Psoas muscle (tissue), 8 donors: ENCODE measurements at regions of chr12 and their contacts with region 1.

Region 1: DNA sequence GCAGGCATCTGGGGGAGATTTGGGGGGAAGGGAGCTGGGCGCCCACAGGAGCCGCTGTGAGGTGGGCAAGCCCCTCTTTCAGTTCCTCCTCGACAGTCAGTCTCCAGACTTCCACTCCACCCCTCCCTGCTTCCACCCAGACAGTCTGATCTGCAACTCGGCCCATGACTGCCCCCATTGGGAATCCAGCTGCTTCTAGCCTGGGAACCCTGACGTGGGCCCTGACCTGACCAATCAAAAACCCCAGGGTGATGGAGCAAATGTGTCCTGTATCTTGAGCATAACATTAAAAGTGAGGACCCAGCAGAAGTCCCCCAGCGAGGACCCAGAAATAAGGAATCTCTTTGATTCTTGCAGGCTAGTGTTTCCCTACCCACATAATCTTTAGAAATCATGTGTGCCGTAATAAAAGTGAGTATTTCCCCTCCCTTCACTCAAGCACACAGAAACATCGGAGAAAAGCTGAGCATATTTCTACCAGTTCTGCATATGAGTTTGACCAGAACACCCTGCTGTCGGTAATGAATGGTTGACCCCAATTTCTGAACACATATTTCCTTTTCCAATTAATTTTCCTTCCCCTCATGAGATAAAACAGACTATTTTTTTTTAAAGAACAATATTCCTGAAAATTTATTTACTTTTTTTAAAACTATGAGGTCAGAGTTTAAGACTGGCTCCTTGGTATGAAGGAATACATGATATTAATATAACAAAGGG is 6.4 kb downstream of the SSH1 start:
- DNase-seq: peak; percentile 59 to 72
- ATAC-seq: peak in 3 of 4 donors; percentile 22 to 46 (median 42)
- H3K4me3 ChIP-seq: no peak overlapping the region
- H3K27ac ChIP-seq: peak overlapping the region; percentile 100
- H3K4me1 ChIP-seq: peaks cover 86% of the 10 kb centered on the region
- H3K27me3 ChIP-seq: no peaks in the 10 kb centered on the region
- CTCF ChIP-seq: peak; percentile 6

Region 2: DNA sequence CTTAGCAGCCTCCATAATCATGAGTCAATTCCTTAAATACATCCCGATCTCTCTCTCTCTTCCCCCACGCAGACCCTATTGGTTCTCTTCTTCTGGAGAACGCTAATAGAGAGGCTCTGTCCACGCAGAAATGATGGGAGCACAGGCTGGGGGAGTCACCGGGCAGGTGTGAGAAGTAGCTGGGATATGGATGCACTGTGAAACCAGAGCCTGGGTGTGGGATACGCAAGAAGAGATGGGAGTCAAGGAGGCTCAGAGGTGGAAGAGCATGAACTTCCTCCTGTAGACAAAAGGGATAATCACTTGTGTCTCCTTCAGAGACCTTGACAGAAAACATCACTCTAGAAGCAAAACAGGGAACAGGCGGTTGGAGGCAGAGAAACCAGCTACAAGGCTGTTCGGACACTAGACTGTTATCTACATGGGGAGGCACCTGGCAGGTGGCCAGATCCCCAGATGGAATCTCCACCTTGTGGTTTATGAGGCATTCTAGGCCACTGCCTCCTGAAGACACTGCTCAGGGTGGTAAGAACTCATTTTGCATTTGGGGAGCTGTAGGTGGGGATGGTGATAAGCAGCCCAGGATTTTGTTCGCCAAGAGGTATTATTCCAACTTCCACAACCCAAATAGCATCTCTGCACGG is 210.1 kb before region 1 on chr12:
- intact Hi-C with region 1: no loop called
- DNase-seq: no peak
- ATAC-seq: peak in 3 of 4 donors; percentile 4 to 24 (median 19)
- H3K4me3 ChIP-seq: no peak overlapping the region
- H3K27ac ChIP-seq: peak overlapping the region; percentile 28
- H3K4me1 ChIP-seq: peaks cover 38% of the 10 kb centered on the region
- H3K27me3 ChIP-seq: peaks cover 0 to 6% (median 0%) of the 10 kb centered on the region in 3 donors
- CTCF ChIP-seq: no peak

Region 3: GRCh38 chr12:108773798-108774788 is 76.9 kb before region 1 on chr12:
- intact Hi-C with region 1: no loop called
- DNase-seq: peak; percentile 85 to 94
- ATAC-seq: peak; percentile 69 to 94 (median 92)
- H3K4me3 ChIP-seq: no peak overlapping the region
- H3K27ac ChIP-seq: peak overlapping the region; percentile 78
- H3K4me1 ChIP-seq: peaks cover 31% of the 10 kb centered on the region
- H3K27me3 ChIP-seq: no peaks in the 10 kb centered on the region
- CTCF ChIP-seq: no peak

Region 4: GRCh38 chr12:108816652-108817335 is 34.2 kb before region 1 on chr12:
- intact Hi-C with region 1: loop called in 1 of 2 experiments (anchors 5 kb)
- DNase-seq: peak; percentile 58 to 80
- ATAC-seq: peak; percentile 50 to 69 (median 65)
- H3K4me3 ChIP-seq: no peak overlapping the region
- H3K27ac ChIP-seq: peak overlapping the region; percentile 70
- H3K4me1 ChIP-seq: peaks cover 45% of the 10 kb centered on the region
- H3K27me3 ChIP-seq: no peaks in the 10 kb centered on the region
- CTCF ChIP-seq: no peak

Region 5: DNA sequence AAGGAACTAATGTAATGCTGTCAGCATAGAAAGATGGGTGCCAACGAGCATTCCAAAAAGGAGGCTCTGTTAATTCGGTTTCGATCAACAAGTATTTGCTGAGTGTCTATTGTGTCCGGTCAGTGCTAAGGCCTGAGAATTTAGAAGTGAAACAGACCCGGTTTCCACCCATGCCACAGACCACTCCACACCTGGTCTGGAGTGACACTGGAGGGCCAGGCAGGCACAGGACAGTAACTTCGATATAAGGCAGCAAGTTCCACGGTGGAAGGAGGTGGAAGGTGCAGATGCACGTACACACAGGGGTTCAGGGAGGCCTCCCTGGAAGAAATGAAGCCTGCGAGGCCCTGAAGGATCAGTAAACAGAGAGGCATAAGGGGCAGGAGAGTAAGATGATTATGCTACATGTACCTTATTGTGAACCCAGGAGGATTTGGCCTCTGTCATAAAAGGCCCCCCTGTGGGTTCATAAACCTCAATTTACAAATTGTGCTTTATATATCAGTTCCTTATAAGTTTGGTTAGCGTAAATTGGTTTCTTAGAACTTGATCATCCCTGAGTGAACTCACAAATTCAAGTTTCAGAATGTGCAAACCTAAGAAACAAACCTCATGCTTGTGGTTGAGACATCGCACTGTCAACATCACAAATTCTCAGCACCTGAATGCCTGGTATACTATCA is 19.6 kb before region 1 on chr12:
- intact Hi-C with region 1: no loop called
- DNase-seq: no peak
- ATAC-seq: no peak
- H3K4me3 ChIP-seq: no peak overlapping the region
- H3K27ac ChIP-seq: peak overlapping the region; percentile 92
- H3K4me1 ChIP-seq: peaks cover 81% of the 10 kb centered on the region
- H3K27me3 ChIP-seq: no peaks in the 10 kb centered on the region
- CTCF ChIP-seq: no peak